Mammary epithelial cell (primary cell): ENCODE measurements at regions of chr13 and their contacts with region 1.

Region 1: DNA sequence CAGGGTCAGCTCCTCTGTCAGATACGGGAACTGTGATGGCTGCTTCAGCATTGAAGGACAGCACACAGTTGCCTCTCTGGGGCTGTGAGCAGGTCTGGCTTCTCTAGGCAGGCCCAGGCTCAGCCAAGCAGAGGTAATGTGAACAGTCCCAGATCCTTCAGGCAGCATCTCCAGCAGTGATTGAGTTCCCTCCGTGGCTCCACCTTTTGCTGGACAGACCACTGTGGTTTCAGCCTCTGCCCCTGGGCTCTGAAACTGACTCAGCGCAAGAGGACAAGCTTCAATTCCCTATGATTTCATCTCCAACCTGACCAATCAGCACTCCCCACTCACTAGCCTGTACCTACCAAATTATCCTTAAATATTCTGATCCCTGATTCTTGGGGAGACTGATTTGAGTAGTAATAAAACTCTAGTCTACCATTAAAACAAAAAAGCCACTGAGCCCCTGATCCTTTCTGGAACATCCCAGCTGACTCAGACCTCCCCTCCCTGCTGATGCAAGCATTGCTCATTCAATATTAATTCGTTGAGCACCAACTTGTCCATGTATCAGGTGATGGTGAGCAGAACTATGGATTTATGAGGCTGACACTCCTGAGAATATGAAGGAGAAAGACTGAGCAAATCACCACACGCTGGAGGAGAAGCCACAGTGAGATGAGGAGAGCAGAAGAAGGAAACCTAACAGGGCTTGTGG is 16.7 kb downstream of the GSX1 start:
- DNase-seq: peak; percentile 94
- H3K4me3 ChIP-seq: no peak overlapping the region
- H3K27ac ChIP-seq: peak overlapping the region; percentile 75
- H3K4me1 ChIP-seq: peaks cover 27% of the 10 kb centered on the region
- H3K27me3 ChIP-seq: no peaks in the 10 kb centered on the region
- CTCF ChIP-seq: no peak

Region 2: DNA sequence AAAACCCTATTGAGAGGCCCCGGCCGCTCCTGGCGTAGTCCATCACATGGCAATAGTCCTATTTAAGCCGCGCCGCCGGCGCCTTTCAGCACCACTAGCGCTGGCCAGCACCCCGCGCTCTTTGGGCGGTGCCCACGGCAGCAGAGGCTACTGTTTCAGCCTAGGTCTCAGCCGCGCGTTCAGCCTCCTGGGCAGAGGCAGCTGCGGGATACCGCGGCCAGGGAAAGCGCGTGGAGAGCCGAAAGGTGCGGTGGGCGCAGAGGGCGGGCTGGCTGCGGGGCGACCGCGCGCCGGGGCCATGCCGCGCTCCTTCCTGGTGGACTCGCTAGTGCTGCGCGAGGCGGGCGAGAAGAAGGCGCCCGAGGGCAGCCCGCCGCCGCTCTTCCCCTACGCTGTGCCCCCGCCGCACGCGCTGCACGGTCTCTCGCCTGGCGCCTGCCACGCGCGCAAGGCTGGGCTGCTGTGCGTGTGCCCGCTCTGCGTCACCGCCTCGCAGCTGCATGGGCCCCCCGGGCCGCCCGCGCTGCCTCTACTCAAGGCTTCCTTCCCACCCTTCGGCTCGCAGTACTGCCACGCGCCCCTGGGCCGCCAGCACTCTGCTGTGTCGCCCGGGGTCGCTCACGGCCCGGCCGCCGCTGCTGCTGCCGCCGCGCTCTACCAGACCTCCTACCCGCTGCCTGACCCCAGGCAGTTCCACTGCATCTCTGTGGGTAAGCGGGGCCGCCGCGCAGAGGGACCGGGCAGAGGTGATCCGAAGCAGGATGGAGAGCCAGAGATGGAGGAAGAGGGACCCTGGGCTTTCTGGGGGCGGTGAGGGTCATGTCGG is 16.4 kb before region 1 on chr13 and contains the start of gene GSX1:
- CTCF ChIA-PET with region 1: no interaction called
- dilution Hi-C with region 1: no loop called
- in situ Hi-C with region 1: no loop called
- intact Hi-C with region 1: loop called (anchors 1 kb)
- DNase-seq: peak; percentile 79
- H3K4me3 ChIP-seq: peak within 1 kb of the TSS in 1 of 3 experiments; percentile 31
- H3K27ac ChIP-seq: no peak within 1 kb of the TSS
- H3K4me1 ChIP-seq: peaks cover 7% of the 10 kb centered on the region
- H3K27me3 ChIP-seq: peaks cover 74% of the 10 kb centered on the region
- CTCF ChIP-seq: no peak
- total RNA-seq, gene GSX1: not detected